ENCODE measurements at regions of chr16 and their contacts with region 1.

Region 1: DNA sequence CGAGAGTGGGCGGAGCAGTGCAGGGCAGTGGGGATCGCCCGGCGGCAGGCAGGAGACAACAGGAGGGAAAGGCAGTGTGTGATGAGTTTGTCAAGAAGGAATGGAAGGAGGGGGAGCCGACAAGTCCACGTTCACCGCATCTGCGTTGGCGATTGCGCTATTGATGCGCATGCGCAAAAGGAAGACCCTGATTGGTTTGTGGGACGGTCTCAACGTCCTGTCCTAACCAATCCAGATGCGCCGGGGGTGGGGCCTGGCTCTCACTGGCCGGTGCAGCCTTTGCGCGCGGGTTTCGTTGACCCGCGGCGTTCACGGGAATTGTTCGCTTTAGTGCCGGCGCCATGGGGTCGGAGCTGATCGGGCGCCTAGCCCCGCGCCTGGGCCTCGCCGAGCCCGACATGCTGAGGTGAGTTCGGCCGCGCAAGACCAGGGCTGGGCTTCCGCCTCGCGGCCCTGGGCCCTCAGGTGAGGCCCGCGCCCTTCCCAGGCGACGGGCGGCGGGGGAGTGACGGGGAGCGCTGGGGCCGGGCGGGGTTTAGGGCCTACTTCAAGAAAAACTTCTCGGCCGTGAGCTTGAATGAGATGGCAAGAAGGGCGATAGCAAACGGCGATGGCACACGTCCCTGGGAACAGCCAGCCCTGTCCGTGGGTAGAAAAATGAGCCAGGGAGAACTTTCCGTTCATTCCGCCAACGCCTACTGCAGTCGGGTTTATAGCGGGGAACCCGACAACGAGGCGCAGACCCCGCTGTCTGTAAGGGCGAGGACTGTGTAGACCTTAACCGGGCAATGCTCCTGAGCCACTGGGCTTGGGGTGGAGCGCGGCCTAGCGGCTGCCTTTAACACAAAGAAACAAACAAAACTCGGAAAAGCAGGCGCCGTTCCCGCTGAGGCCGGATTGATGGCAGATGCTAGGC is at the start of gene ORC6:
- DNase-seq: peak; percentile 100
- ATAC-seq: peak; percentile 94
- total RNA-seq, gene ORC6: 2.5 TPM

Region 2: DNA sequence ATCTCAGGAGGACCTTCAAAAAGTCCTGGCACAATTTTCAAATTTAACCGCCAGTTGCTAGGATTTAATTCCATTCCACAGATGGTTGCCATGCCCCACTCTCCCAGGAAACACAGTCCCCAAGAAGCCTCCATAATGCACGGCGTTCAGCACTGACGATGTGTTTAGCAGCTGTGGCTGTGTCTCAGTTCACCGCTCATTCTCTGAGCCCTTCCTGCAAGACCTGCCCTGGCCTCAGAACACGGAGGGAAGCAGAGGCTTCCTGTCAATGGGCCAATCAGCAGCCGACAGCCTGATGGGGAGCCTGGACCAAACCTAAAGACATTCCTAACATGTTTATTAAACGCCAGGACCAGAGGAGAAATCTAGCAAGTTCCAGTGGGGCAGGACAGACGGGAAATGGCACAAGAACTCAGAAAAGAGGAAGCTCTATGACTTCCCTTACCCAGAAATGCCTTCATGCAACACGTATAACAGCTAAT is 53.7 kb after region 1 on chr16:
- intact Hi-C with region 1: loop called (anchors 10 kb)
- DNase-seq: no peak
- ATAC-seq: peak; percentile 20

Region 3: GRCh38 chr16:46899443-46900143 is 210.0 kb after region 1 on chr16:
- intact Hi-C with region 1: loop called (anchors 10 kb)
- DNase-seq: no peak
- ATAC-seq: no peak

Region 4: DNA sequence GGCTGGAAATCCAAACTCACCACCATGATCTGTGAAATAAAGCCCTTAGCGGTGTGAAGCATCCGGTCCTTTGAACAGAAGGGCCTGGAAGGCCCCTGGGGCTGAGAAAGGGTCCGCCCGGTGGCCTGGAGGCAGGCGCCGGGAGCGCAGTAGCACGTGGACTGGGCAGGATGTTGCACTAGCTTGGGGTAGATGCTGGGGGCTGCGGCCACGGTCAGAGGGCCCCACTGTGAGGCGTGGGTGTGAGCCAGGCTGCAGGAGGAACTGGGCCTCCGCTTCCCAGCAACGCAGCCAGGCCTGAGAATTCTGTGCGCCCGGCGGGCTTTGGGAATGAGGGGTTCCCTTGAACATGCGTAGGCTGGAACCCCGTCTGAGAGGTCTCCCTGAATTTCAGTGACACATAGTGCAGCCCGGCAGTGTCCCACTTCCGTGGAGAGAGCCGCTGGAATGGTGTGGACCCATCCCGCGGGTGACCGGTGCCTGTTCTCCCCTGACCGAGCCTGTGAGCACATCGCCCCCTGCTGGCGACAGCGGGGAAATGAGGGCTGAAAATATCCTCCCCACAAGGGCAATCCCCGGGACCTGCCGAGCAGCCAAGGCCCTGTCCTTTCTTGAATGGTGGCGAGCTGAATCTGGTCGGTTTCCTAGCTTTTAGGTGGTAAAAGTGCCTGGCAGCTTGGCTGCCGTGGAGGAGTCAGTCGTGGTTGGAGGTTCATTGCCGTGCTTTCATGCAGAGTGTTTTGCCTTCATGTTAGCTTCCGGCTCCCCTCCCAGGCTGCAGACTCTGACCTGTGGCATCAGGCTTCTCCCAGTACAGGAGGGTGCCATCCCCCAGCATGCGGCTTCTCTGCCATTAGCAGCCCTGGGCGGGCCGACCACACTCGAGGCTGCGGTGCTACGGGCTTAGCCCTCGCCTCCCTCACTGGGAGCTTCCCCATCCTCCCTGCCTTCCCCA is 240.0 kb after region 1 on chr16:
- intact Hi-C with region 1: no loop called
- DNase-seq: peak; percentile 90
- ATAC-seq: peak; percentile 60